Activated B cell treated with CpG ODN at 0.5 μM for 24 hours (primary cell): ENCODE measurements at regions of chr18 and their contacts with region 1.

Region 1: DNA sequence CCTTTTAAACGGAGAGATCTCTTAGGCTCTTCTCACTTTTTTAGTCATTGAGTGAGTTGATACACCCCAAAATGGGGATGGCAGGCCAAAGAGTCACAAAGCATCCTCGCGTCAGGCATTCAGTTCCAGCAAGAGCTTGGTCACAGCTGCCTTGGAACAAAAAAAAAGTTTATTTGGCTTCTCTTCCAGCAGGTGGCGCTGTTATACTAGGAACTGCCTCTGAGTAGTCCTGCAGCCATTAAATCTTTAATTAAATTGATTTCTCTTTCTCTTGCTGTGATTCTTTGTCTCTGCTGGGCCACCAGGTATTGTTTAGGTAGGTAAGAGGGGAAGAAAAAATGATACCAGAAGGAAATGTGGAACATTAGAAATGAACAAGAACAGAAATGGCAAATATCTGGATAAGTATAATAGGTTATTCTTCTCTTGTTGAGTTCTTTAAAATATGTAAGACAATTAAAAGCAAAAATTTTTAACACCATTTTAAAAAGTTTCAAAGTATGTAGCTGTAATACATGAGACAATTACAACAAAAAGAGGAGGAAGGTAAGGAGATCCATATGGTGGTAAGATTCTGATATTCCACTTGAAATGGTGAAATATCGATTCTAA is 175.1 kb downstream of the GALNT1 start:
- DNase-seq: no peak
- ATAC-seq: peak; percentile 75
- H3K4me3 Mint-ChIP-seq: no peak overlapping the region
- H3K27ac Mint-ChIP-seq: no peak overlapping the region
- H3K4me1 Mint-ChIP-seq: no peaks in the 10 kb centered on the region
- H3K27me3 Mint-ChIP-seq: peaks cover 17% of the 10 kb centered on the region
- CTCF ChIP-seq: no peak

Region 2: DNA sequence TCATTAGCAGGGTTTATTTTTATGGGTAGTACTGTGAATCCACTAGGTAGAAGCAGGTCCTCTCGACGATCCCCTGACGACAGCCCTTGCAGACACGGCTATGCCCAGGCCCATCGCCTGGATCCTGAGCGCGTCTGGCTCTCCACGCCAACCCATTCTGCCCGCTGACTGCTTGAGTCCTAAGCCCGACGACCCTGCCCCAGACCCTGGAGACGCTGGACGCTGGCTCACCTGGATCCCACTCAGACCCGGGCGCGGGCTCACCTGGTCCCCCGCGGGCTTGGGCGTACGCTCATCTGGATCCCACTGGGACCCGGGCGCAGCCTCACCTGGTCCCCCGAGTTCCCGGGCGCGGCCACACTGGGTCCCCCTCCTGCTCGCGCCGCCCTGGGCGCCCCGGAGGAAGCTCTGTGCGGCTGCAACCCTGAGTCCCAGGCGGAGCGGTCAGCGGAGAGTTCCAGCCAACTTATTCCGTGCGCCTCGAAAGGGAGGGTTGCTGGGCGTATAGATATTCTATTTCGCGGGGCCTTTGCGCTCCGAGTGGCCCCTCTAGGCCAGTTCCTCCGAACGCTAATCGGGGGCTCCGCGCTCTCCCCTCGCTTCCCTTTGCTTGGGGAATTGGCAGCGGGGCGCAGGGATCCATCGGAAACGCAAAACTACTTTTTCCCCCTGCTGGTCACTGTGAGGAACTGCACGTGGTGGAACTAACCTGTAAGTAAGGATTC is 193.5 kb after region 1 on chr18:
- CTCF ChIA-PET with region 1: interaction called, 45 read pairs
- POLR2A ChIA-PET with region 1: interaction called, 3 read pairs
- intact Hi-C with region 1: loop called (anchors 1 kb)
- DNase-seq: peak; percentile 43
- ATAC-seq: peak; percentile 85
- H3K4me3 Mint-ChIP-seq: peak overlapping the region; percentile 82
- H3K27ac Mint-ChIP-seq: no peak overlapping the region
- H3K4me1 Mint-ChIP-seq: peaks cover 8% of the 10 kb centered on the region
- H3K27me3 Mint-ChIP-seq: peaks cover 27% of the 10 kb centered on the region
- CTCF ChIP-seq: peak; percentile 98

Region 3: DNA sequence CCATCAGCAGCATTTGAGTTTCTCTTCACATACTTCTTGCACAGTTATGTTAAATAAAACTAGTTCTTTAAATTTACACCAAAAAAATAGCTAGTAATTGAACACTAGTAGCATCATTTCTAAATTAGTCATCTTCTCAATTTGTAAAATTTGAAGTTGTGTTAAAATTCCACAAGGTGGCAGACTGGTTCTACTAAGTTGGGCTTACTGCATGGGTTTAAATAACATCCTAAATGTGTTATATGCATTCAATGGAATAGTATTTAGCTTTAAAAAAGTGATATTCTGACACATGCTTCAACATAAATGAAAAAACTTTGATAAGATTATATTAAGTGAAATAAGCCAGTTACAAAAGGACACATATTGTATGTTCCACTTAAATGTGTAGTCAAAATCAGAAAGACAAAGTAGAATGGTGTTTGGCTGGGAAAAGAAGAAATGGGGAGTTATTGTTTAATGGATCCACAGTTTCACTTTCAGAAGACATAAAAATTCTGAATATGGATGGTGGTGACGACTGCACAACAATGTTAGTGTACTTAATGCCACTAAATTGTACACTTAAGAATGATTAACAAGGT is 339.4 kb after region 1 on chr18:
- CTCF ChIA-PET with region 1: no interaction called
- POLR2A ChIA-PET with region 1: no interaction called
- intact Hi-C with region 1: loop called (anchors 2 kb)
- DNase-seq: no peak
- ATAC-seq: no peak
- H3K4me3 Mint-ChIP-seq: no peak overlapping the region
- H3K27ac Mint-ChIP-seq: no peak overlapping the region
- H3K4me1 Mint-ChIP-seq: no peaks in the 10 kb centered on the region
- H3K27me3 Mint-ChIP-seq: peaks cover 5% of the 10 kb centered on the region
- CTCF ChIP-seq: no peak

Region 4: GRCh38 chr18:36572135-36572856 is 815.7 kb after region 1 on chr18:
- CTCF ChIA-PET with region 1: no interaction called
- POLR2A ChIA-PET with region 1: no interaction called
- intact Hi-C with region 1: loop called (anchors 2 kb)
- DNase-seq: no peak
- ATAC-seq: no peak
- H3K4me3 Mint-ChIP-seq: no peak overlapping the region
- H3K27ac Mint-ChIP-seq: no peak overlapping the region
- H3K4me1 Mint-ChIP-seq: no peaks in the 10 kb centered on the region
- H3K27me3 Mint-ChIP-seq: peaks cover 8% of the 10 kb centered on the region
- CTCF ChIP-seq: no peak